Activated T-helper 2 cell treated with anti-CD3 and anti-CD28 coated beads, Interferon-gamma antibody, Interleukin-2, Interleukin-4, amounts not matched to agents 10 μg/mL and 5 μg/mL and 100 μg/mL, durations not matched to agents 14 hours and 24 hours and 36 hours (primary cell): ENCODE measurements at regions of chr9 and their contacts with region 1.

Region 1: GRCh38 chr9:91341239-91341746 is 20.4 kb downstream of the AUH start:
- DNase-seq: no peak
- H3K4me3 Mint-ChIP-seq: peak overlapping the region; percentile 65
- H3K27ac Mint-ChIP-seq: peak overlapping the region; percentile 90
- H3K4me1 Mint-ChIP-seq: peaks cover 72% of the 10 kb centered on the region
- H3K27me3 Mint-ChIP-seq: no peaks in the 10 kb centered on the region

Region 2: GRCh38 chr9:90914868-90915483 is 426.3 kb before region 1 on chr9:
- intact Hi-C with region 1: loop called (anchors 10 kb)
- DNase-seq: peak; percentile 54
- H3K4me3 Mint-ChIP-seq: no peak overlapping the region
- H3K27ac Mint-ChIP-seq: peak overlapping the region; percentile 62
- H3K4me1 Mint-ChIP-seq: peaks cover 14% of the 10 kb centered on the region
- H3K27me3 Mint-ChIP-seq: no peaks in the 10 kb centered on the region

Region 3: DNA sequence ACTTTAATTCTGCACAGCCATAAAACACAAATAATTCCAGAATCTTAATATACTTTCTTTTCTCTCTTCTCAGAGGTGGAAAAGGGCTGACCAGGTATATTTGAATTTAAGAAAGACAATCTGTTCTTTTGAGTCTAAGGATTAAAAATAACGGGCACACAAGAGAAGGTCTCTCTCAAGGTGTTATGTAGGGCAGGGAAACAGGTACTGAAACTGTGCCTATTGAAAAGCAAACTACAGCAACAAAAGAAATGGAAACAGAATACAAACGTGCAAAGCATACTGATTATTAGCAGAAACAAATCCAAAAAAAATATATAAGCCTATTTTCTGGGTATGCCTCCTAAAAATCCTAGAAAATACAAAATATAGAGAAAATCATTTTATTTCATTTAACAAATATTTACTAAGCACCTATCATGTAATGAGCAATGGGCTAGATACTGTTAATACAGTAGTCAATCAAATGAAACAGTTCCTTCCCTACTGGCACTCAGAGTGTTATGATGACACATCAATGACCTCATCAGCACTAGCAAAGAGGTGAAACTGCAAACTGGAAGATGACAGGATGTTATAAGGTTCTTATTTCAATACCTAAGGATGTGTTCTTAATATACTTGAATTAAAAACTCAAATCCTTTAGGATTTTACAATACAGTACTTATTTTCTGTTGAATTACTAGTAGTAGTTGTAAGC is 67.3 kb before region 1 on chr9:
- intact Hi-C with region 1: loop called (anchors 5 kb)
- DNase-seq: no peak
- H3K4me3 Mint-ChIP-seq: no peak overlapping the region
- H3K27ac Mint-ChIP-seq: peak overlapping the region; percentile 46
- H3K4me1 Mint-ChIP-seq: peaks cover 27% of the 10 kb centered on the region
- H3K27me3 Mint-ChIP-seq: no peaks in the 10 kb centered on the region

Region 4: GRCh38 chr9:91305596-91306295 is 35.5 kb before region 1 on chr9:
- intact Hi-C with region 1: loop called (anchors 2 kb)
- DNase-seq: no peak
- H3K4me3 Mint-ChIP-seq: no peak overlapping the region
- H3K27ac Mint-ChIP-seq: peak overlapping the region; percentile 78
- H3K4me1 Mint-ChIP-seq: peaks cover 52% of the 10 kb centered on the region
- H3K27me3 Mint-ChIP-seq: no peaks in the 10 kb centered on the region